Activated naive CD4-positive, alpha-beta T cell treated with anti-CD3 and anti-CD28 coated beads, Interleukin-2, amount 10 ng/mL, durations not matched to agents 7 days and 5 days (primary cell): ENCODE measurements at regions of chr7 and their contacts with region 1.

Region 1: GRCh38 chr7:135672560-135673359 is 10.4 kb downstream of the STMP1 start:
- DNase-seq: no peak
- H3K4me3 Mint-ChIP-seq: no peak overlapping the region
- H3K27ac Mint-ChIP-seq: peak overlapping the region; percentile 45
- H3K4me1 Mint-ChIP-seq: peaks cover 6% of the 10 kb centered on the region
- H3K27me3 Mint-ChIP-seq: no peaks in the 10 kb centered on the region

Region 2: GRCh38 chr7:135634191-135634878 is 38.4 kb before region 1 on chr7:
- CTCF ChIA-PET with region 1: no interaction called
- DNase-seq: no peak
- H3K4me3 Mint-ChIP-seq: no peak overlapping the region
- H3K27ac Mint-ChIP-seq: no peak overlapping the region
- H3K4me1 Mint-ChIP-seq: no peaks in the 10 kb centered on the region
- H3K27me3 Mint-ChIP-seq: no peaks in the 10 kb centered on the region

Region 3: DNA sequence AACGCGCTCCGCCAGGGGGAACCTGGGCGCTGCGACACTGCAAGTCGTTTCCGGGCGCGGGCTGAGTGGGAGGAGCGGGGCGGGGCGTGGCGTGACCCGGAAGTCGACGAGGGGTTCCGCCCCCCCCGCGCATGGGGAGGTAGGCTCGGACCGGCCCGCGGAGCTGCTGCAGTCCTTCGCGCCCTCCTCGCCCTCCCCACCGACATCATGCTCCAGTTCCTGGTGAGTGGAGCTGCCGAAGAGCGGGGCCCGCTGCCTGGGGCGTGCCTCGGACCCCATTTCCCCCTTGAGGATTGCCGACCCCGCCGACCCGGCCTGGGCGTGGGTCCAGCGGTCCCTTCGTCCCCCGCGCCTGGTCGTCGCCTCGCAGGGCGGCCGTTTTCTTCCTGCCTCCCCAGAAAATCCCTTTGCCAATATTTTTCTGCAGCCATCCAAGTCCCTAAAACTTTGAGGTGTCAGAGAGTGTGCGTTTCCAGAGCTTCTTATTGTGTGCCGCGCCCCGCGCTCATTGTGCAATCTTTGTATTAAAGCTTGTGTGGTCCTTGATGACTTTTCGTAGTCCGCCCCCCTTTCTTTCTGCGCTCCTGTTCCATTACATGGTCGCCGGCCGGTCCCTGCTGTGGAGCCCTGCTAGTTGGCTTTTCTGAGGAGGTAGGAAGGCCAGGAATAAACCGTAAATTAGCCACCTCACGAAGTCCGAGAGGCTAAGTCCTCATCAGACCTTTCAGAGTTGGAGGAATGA is 10.2 kb before region 1 on chr7 and contains the start of gene STMP1:
- CTCF ChIA-PET with region 1: interaction called, 39 read pairs
- DNase-seq: peak; percentile 96
- H3K4me3 Mint-ChIP-seq: peak within 1 kb of the TSS; percentile 87
- H3K27ac Mint-ChIP-seq: peak within 1 kb of the TSS; percentile 84
- H3K4me1 Mint-ChIP-seq: peaks cover 34% of the 10 kb centered on the region
- H3K27me3 Mint-ChIP-seq: no peaks in the 10 kb centered on the region

Region 4: GRCh38 chr7:135684136-135684535 is 11.4 kb after region 1 on chr7:
- CTCF ChIA-PET with region 1: interaction called, 23 read pairs
- DNase-seq: no peak
- H3K4me3 Mint-ChIP-seq: no peak overlapping the region
- H3K27ac Mint-ChIP-seq: no peak overlapping the region
- H3K4me1 Mint-ChIP-seq: peaks cover 24% of the 10 kb centered on the region
- H3K27me3 Mint-ChIP-seq: no peaks in the 10 kb centered on the region